Right cardiac atrium (tissue), 5 donors: ENCODE measurements at regions of chr15 and their contacts with region 1.

Region 1: DNA sequence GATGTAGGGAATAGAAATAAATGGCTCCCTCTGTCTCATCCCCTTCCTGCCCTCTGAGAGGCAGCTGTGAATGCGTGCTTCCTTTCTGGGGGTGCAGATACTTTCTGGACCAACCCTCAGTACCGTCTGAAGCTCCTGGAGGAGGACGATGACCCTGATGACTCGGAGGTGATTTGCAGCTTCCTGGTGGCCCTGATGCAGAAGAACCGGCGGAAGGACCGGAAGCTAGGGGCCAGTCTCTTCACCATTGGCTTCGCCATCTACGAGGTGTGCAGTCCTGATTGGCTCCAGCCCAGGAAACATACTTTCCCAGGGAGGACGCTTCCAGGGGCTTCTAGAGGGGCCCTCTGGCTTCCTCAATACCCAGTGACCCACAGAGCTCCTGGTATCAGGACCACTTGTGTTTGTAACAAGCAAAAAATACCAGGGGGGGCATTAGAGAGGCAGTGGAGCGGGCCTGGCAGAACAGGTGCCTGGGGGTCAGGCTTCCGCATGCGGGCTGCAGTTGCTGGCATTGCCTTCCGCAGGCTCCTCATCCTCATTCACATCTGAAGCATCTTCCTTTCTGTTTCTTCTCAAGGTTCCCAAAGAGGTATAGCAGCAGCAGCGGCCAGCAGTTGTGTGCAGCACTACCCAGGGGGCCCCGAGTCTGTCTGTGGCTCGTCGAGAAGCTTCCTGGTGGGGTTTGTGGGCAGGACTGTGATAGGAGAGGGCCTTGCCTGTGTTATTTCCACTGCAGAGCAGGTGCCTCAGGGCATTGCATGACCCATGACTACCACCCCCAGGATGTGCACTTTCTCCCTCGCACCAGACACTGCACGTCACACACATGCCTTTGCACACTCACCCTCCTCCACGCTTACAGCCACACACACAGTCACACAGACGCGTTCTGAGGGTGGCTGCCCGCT is 42.5 kb downstream of the CAPN3 start:
- DNase-seq: no peak
- ATAC-seq: no peak
- H3K4me3 ChIP-seq: no peak overlapping the region
- H3K27ac ChIP-seq: no peak overlapping the region
- H3K4me1 ChIP-seq: no peaks in the 10 kb centered on the region
- H3K27me3 ChIP-seq: no peaks in the 10 kb centered on the region

Region 2: DNA sequence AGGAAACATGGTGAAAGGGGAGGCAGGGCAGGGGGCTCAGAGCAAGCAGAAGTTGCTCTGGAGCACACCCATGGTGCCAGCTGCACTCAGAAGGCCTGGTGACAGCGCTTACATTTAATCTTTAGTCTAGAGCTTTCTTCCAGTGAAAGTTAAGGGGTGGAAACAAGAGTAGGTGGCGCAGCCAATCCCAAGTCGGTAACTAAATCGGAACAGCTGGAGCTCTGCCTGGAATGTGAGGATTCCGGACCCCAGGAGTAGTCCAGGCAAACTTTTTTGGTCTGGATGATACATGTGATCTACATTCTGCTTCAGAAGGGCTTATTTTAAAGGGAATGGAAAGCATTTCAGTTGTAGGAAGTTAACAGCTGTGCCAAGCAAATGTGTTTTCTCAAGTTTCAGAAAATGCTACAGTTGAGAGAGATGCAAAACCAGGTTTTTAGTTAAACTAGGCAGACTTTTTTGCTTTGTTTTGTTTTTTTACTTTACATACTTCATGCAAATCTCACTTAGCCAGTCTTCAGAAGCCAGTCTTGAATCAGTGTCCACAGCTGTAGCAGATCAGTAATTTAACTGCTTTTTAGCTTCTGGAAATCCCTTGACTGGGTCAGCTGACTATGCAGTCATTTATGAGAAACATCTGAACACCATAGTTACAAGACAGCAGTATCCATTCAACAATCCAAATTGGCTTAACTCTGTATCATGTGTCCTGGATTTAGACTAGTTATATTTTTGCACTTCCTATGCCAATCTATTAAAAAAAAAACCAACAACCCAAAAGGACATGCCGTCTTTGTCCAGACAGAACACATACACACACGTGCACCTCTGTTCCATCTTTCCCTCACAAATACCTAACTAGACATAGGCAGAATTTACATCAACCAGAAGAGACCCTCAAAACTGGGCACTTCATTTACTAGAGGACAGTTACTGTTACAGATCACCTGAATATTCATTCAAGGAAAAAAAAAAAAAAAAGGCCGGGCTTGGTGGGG is 55.9 kb after region 1 on chr15:
- intact Hi-C with region 1: loop called in 1 of 4 experiments (anchors 10 kb)
- DNase-seq: peak; percentile 80 to 86 (median 81)
- ATAC-seq: peak; percentile 95
- H3K4me3 ChIP-seq: peak overlapping the region; percentile 81
- H3K27ac ChIP-seq: peak overlapping the region; percentile 93
- H3K4me1 ChIP-seq: peaks cover 3% of the 10 kb centered on the region
- H3K27me3 ChIP-seq: no peaks in the 10 kb centered on the region